ENCODE measurements at regions of chr16 and their contacts with region 1.

Region 1: DNA sequence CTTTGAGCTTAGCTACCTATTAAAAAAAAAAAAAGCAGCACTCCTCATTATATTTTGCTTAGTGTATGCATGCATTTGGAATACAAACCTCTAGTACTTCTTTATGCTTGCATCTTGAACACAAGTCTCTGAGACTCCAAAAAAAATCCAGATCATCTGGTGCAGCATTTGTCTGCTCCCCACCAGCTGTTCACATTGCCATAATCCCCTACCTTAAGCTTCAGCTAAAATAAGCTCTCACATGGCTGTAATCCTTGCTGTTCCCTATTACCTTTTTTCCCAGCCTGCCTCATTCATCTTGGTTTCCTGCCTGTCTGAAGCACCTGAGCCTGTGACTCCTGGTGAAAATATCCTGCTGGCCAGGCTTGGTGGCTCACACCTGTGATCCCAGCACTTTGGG is 7.5 kb upstream of the NFATC2IP start:
- DNase-seq: no peak
- ATAC-seq: no peak
- H3K4me3 ChIP-seq: no peak overlapping the region
- H3K4me3 Mint-ChIP-seq: no peak overlapping the region
- H3K27ac ChIP-seq: no peak overlapping the region
- H3K27ac Mint-ChIP-seq: no peak overlapping the region
- H3K4me1 ChIP-seq: peaks cover 9 to 10% of the 10 kb centered on the region in 2 donors
- H3K4me1 Mint-ChIP-seq: peaks cover 17% of the 10 kb centered on the region
- H3K27me3 ChIP-seq: no peaks in the 10 kb centered on the region
- H3K27me3 Mint-ChIP-seq: no peaks in the 10 kb centered on the region
- CTCF ChIP-seq: no peak

Region 2: GRCh38 chr16:28823872-28824716 is 119.2 kb before region 1 on chr16:
- CTCF ChIA-PET with region 1: interaction called, 18 read pairs
- POLR2A ChIA-PET with region 1: interaction called, 4 read pairs
- intact Hi-C with region 1: loop called (anchors 1 kb)
- DNase-seq: peak; percentile 97
- ATAC-seq: peak; percentile 76
- H3K4me3 ChIP-seq: peak overlapping the region; percentile 76 to 95 (median 87)
- H3K4me3 Mint-ChIP-seq: peak overlapping the region; percentile 98
- H3K27ac ChIP-seq: peak overlapping the region; percentile 98 to 99
- H3K27ac Mint-ChIP-seq: peak overlapping the region; percentile 97
- H3K4me1 ChIP-seq: peaks cover 19 to 23% of the 10 kb centered on the region in 2 donors
- H3K4me1 Mint-ChIP-seq: peaks cover 28% of the 10 kb centered on the region
- H3K27me3 ChIP-seq: no peaks in the 10 kb centered on the region
- H3K27me3 Mint-ChIP-seq: no peaks in the 10 kb centered on the region
- CTCF ChIP-seq: no peak

Region 3: GRCh38 chr16:28863929-28864793 is 79.1 kb before region 1 on chr16:
- CTCF ChIA-PET with region 1: interaction called, 70 read pairs
- POLR2A ChIA-PET with region 1: interaction called, 23 read pairs
- intact Hi-C with region 1: loop called (anchors 1 kb)
- DNase-seq: peak; percentile 41
- ATAC-seq: no peak
- H3K4me3 ChIP-seq: peak overlapping the region; percentile 9 to 98 (median 77)
- H3K4me3 Mint-ChIP-seq: peak overlapping the region; percentile 100
- H3K27ac ChIP-seq: peak overlapping the region; percentile 79 to 82
- H3K27ac Mint-ChIP-seq: peak overlapping the region; percentile 99
- H3K4me1 ChIP-seq: peaks cover 5 to 25% of the 10 kb centered on the region in 2 donors
- H3K4me1 Mint-ChIP-seq: peaks cover 28% of the 10 kb centered on the region
- H3K27me3 ChIP-seq: no peaks in the 10 kb centered on the region
- H3K27me3 Mint-ChIP-seq: no peaks in the 10 kb centered on the region
- CTCF ChIP-seq: no peak

Region 4: GRCh38 chr16:28873536-28874201 is 69.6 kb before region 1 on chr16:
- CTCF ChIA-PET with region 1: interaction called, 83 read pairs
- POLR2A ChIA-PET with region 1: interaction called, 3 read pairs
- intact Hi-C with region 1: loop called (anchors 1 kb)
- DNase-seq: peak; percentile 72
- ATAC-seq: peak; percentile 90
- H3K4me3 ChIP-seq: no peak overlapping the region
- H3K4me3 Mint-ChIP-seq: no peak overlapping the region
- H3K27ac ChIP-seq: no peak overlapping the region
- H3K27ac Mint-ChIP-seq: no peak overlapping the region
- H3K4me1 ChIP-seq: no peaks in the 10 kb centered on the region
- H3K4me1 Mint-ChIP-seq: peaks cover under 1% of the 10 kb centered on the region
- H3K27me3 ChIP-seq: no peaks in the 10 kb centered on the region
- H3K27me3 Mint-ChIP-seq: no peaks in the 10 kb centered on the region
- CTCF ChIP-seq: peak; percentile 80

Region 5: DNA sequence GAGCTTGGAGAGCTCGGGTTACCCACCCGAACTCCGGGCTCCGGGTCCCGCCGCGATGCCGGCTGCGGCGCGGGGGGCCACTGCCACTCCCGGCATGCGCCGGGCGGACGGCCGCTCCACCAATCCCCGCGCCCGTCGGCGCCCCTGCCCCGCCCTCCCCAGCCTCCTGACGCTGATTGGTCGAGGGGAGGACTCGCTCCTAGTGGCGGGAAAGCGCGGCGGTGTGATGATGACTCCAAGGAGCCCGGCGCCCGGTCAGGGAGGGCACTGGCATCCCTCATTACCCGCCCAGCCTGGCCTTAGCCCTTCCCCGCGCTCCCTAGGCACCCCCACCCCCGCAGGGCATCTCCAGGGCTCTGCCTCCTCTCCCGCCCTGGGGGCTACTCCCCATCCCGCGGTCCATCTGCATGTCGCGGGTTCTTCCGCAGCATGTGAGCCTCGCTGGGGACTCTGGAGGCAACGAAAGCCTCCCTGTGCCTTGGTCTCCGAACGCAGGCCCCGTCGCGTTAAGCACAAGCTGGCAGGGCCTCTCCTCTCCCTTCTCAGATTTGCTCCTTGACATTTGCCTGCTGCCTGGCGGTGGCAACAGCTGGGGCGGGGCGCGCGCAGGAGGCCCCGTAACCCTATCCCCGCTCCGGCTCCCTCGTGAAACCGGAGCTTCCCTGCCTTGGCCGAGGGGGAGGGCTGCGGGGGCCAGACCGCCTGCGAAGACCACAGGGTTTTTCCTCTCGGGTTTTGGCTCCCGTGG is 63.3 kb before region 1 on chr16:
- CTCF ChIA-PET with region 1: interaction called, 83 read pairs
- POLR2A ChIA-PET with region 1: no interaction called
- intact Hi-C with region 1: loop called (anchors 1 kb)
- DNase-seq: peak; percentile 89
- ATAC-seq: peak; percentile 99
- H3K4me3 ChIP-seq: peak overlapping the region; percentile 53 to 94 (median 87)
- H3K4me3 Mint-ChIP-seq: peak overlapping the region; percentile 92
- H3K27ac ChIP-seq: peak overlapping the region in 1 of 2 donors; percentile 43
- H3K27ac Mint-ChIP-seq: no peak overlapping the region
- H3K4me1 ChIP-seq: peaks cover 13 to 17% of the 10 kb centered on the region in 2 donors
- H3K4me1 Mint-ChIP-seq: peaks cover 15% of the 10 kb centered on the region
- H3K27me3 ChIP-seq: peaks cover 0 to 8% (median 1%) of the 10 kb centered on the region in 4 experiments
- H3K27me3 Mint-ChIP-seq: peaks cover 6% of the 10 kb centered on the region
- CTCF ChIP-seq: no peak

Region 6: GRCh38 chr16:28902909-28903308 is 40.4 kb before region 1 on chr16:
- CTCF ChIA-PET with region 1: interaction called, 8 read pairs
- POLR2A ChIA-PET with region 1: no interaction called
- intact Hi-C with region 1: loop called (anchors 2 kb)
- DNase-seq: no peak
- ATAC-seq: peak; percentile 56
- H3K4me3 ChIP-seq: no peak overlapping the region
- H3K4me3 Mint-ChIP-seq: peak overlapping the region; percentile 32
- H3K27ac ChIP-seq: peak overlapping the region in 1 of 2 donors; percentile 55
- H3K27ac Mint-ChIP-seq: peak overlapping the region; percentile 83
- H3K4me1 ChIP-seq: peaks cover 12 to 16% of the 10 kb centered on the region in 2 donors
- H3K4me1 Mint-ChIP-seq: peaks cover 16% of the 10 kb centered on the region
- H3K27me3 ChIP-seq: no peaks in the 10 kb centered on the region
- H3K27me3 Mint-ChIP-seq: no peaks in the 10 kb centered on the region
- CTCF ChIP-seq: no peak

Measured in B cell (primary cell).